ENCODE measurements at regions of chr2 and their contacts with region 1.

Region 1: DNA sequence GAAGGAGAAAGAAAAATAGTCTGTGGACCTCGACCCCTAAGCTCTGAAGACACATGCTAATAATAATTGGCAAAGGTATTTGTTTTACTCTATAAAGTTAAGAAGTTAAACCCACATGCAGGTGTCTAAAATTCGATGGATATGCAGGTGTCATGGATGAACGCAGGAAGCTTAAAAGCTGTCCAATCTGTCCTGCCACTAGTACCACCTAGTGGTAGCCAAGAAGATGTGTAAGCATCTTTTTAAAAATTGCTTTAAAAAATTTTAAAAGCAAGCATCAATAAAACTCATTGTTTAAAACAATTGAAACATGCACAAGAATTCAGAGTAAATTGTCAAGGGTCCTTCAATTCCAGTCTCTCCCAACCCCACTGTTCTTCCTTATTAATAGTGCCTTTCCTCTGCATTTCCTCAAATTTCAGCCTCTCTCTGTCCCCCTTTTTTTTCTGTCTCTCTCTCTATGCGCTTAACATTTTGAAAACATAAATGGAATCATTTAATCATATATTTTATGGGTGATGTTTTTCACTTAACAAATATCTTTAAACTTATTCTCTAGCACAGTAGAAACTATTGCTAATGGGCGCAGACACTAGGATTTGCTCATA is 30.6 kb upstream of the PPP3R1 start:
- DNase-seq: no peak

Region 2: GRCh38 chr2:68044099-68044498 is 238.8 kb before region 1 on chr2:
- intact Hi-C with region 1: no loop called
- DNase-seq: no peak

Region 3: DNA sequence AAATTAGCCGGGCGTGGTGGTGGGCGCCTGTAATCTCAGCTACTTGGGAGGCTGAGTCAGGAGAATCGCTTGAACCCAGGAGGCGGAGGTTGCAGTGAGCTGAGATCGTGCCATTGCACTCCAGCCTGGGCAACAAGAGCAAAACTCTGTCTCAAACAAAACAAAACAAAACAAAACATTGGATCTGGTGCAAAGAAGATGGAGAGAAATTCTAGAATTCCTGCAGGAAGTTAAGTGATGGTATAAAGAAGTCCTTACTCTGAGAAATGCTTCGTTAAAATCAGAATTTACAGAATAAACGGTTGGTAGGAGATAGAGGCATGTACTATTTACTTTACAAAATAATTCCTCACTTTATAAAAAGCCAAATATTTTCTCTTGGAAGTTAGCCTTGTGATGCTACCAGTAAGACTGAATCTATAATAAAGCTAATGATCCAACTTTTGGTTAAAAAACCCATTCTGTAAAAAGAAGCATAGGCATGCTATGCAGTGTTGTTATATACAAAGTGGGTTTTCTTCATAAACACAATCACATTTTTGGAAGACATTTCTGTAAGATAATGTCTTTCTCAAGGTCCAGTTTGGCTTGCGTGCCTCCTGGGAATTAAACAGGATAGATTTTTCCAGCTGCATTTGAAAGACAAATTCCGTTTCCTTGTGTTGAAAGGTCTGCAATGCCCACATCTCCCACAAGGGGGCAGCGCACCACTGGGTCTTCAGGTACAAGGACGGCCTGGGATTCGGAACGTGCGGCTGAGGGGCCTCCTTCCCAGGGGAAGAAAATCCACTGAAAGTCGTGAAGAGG is 160.8 kb before region 1 on chr2:
- intact Hi-C with region 1: loop called (anchors 2 kb)
- DNase-seq: peak; percentile 91

Region 4: GRCh38 chr2:68196120-68196716 is 86.7 kb before region 1 on chr2:
- intact Hi-C with region 1: loop called (anchors 5 kb)
- DNase-seq: no peak

Region 5: DNA sequence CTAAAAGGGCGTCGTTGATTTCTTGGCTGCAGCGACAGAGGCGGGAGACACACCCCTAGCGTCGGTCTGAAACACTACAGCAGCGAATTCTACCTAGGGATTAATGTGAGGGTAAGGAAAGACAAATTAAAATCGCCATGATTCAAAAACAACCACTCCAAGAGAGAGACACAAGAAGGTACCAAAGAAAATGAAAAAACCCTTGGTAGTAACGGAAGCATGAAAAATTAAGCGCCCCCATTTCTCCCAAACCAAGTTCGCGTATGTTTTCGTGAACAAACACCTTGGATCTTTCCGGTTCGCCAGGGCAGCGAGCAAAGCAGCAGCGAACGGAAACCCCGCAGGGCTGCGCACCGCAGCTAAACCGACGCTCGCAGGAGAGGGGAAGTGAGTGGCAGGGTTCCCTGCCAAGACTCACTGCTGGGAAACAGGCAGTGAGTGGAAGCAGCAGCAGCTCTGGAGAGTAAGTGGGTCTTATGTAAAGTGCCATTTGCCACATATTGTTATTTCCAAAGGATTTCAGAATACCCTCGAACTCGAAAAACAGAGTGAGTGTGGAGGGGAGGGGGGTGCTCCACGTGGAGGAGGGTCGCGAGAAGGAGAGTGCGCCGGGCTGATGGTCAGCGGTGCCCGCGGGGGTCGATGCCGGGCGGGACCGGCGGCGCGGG is 31.6 kb before region 1 on chr2:
- intact Hi-C with region 1: loop called (anchors 5 kb)
- DNase-seq: peak; percentile 82

Region 6: DNA sequence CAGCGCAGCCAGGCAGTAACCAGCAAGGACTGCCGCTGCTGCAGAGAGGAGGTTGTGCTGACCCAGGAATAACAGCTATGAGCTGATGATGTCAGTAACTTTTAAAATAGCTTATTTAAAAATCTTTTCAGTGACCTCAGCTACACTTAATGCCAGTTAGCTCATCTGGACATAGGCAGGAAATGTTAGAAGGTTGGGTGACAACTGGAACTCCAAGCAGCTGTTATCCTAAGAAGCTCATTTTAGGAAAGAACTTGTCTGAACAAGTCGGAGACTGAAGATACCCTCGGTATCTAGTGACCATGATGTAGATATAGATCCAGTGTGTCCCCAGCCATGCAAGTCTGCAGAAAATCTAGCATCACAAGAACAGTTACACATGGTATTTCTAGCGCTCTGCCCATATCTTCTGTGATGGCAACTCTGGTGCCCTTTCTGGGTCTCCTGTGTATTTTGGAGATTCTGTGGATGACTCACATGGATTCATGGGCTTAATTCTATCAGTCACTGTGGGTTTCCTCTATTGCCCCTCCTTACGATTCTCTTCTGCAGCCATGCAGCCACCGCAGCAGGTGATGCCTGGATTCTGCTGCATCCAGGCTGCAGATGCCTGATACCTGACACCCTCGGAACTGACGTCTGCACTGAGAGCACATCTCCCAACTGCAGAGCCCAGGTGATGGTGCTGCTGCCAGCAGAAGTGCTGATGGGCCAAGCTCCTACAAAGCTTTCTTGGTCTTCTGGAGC is 62.4 kb after region 1 on chr2:
- intact Hi-C with region 1: no loop called
- DNase-seq: no peak

Region 7: GRCh38 chr2:68362069-68362468 is 79.2 kb after region 1 on chr2:
- intact Hi-C with region 1: no loop called
- DNase-seq: peak; percentile 91

Region 8: DNA sequence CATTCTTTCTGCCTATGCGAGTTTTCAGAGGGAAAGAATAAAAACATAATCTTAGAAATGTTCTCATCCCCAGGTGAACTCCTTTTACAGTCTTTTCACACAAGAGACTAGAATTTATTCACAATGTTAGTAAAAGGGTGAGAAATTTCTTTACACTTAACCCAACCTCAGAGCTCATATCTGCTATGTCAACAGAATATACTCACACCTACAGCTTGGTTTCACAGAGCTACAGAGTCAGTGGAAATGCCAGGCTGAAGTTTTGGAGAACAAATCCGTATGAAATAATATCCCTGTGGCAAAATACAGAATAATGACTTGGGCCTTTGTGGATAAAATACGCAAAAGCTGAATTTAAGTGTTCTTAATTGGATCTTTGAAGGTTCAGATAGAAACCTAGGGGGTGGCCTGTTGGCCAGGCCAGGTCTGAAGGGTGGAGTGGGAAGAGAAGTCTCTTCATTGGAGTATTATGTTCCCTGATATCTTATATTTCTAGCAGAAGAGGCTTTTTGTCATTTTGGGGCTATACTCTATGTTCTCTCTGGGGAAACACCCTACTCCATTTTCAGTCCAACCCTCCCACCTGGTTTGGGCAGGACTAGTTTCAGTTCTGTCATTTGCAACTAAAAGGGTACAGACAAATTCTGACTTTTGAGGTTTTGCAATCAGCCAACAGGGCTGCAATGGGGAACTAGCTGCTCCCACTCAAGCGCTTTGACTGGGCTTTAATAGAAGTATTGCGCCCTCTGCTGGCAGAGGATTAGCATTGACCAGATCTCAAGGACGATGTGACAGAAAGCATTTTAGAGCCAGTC is 158.5 kb after region 1 on chr2:
- intact Hi-C with region 1: loop called (anchors 10 kb)
- DNase-seq: peak; percentile 88